ENCODE measurements at regions of chr16 and their contacts with region 1.

Region 1: GRCh38 chr16:1363501-1364041 is 11.8 kb downstream of the GNPTG start:
- DNase-seq: peak; percentile 79
- ATAC-seq: peak; percentile 94
- H3K4me3 Mint-ChIP-seq: no peak overlapping the region
- H3K27ac Mint-ChIP-seq: peak overlapping the region; percentile 92; the same call in 1 of the 2 replicates
- H3K4me1 Mint-ChIP-seq: no peaks in the 10 kb centered on the region
- H3K27me3 Mint-ChIP-seq: no peaks in the 10 kb centered on the region
- CTCF ChIP-seq: peak; percentile 77

Region 2: DNA sequence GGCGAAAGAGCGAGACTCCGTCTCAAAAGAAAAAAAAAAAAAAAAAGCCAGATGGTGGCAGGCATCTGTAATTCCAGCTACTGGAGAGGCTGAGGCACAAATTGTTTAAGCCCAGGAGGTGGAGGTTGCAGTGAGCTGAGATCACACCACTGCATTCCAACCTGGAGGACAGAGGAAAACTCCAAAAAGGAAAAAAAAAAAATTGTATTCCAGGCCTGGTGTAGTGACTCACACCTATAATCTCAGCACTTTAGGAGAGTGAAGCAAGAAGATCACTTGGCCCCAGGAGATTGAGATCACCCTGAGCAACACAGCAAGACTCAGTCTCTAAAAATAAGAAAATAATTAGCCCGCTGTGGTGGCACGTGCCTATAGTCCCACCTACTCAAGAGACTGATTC is 1163.2 kb before region 1 on chr16:
- CTCF ChIA-PET with region 1: no interaction called
- POLR2A ChIA-PET with region 1: no interaction called
- DNase-seq: no peak
- ATAC-seq: no peak
- H3K4me3 Mint-ChIP-seq: no peak overlapping the region
- H3K27ac Mint-ChIP-seq: no peak overlapping the region
- H3K4me1 Mint-ChIP-seq: no peaks in the 10 kb centered on the region
- H3K27me3 Mint-ChIP-seq: no peaks in the 10 kb centered on the region
- CTCF ChIP-seq: no peak

Region 3: DNA sequence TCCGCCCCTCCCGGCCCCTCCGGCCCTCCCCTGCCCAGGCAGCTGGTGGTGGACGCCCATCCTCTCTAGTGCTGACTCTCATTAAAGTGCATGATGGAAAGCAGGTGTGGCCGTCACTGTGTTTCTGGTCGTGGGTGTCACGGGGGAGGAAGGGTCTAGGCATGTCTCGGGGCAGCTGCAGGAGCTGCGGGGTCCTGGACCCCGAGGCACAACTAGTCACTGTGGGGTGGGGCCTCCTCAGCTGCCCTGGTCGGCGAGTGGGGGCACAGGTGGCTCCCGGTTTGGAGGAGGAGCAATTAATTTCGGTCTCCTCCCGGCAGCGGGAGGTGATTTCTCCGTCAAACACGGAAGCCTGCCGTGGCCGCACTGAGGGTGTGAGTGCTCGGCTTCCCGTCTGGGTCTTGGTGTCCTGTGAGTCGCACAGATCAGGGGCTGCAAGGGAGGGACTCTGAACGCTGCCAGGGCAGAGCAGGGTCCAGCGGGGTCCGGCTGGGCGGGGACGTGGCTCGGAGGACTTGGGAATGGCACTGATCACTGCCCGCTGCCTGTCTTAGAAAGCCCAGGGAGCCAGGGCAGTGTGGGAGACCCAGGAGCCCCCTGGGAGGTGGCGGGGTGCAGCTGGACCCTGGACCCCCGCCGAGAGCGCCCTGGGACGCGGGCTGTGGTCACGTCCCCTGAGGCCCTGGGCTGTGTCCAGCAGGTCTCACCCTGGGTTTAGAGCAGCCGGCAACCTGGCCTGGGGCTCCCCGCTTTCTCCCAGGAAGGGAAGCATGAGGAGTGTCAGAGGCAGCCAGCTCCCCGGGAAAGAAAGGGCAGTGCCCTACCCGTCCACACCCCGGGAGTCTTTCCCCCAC is 104.4 kb before region 1 on chr16:
- CTCF ChIA-PET with region 1: no interaction called
- POLR2A ChIA-PET with region 1: no interaction called
- DNase-seq: no peak
- ATAC-seq: no peak
- H3K4me3 Mint-ChIP-seq: peak overlapping the region; percentile 56
- H3K27ac Mint-ChIP-seq: no peak overlapping the region
- H3K4me1 Mint-ChIP-seq: peaks cover 5% of the 10 kb centered on the region
- H3K27me3 Mint-ChIP-seq: peaks cover 28% of the 10 kb centered on the region
- CTCF ChIP-seq: no peak

Region 4: DNA sequence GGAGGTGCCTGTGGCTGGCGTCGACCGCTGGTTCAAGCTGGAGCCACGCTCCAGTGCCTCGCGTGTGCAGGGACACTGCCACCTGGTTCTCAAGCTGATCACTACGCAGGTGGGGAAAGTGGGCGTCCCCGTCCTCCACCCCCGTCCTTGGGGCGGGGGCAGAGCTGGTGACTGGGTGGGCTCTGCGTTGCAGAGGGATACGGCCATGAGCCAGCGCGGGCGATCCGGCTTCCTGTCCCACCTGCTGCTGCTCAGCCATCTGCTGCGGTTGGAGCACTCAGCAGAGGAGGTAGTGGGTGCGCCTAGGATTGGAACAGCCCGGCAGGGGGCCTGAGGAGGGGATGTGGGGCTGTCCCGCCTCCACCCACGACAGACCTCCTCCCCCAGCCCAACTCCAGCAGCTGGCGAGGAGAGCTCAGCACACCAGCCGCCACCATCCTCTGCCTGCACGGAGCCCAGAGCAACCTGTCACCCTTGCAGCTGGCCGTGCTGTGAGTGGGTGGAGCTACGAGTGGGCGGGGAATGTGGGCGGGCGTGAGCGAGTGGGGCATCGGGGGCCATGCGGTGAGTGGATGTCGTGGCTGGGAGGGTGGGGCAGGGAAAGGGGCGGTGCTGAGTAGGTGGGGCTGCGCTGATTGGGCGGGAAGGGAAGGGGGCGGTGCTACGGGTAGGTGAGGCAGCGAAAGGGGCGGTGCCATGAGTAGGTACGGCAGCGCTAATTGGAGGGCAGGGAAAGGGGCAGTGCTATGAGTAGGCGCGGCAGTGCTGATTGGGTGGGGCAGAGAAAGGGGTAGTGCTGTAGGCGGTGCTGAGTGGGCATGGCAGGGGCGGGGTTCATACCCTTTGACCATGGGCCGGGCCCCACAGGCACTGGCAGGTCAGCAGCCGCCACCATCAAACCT is 20.8 kb before region 1 on chr16:
- CTCF ChIA-PET with region 1: interaction called, 19 read pairs
- POLR2A ChIA-PET with region 1: no interaction called
- DNase-seq: peak; percentile 98
- ATAC-seq: peak; percentile 98
- H3K4me3 Mint-ChIP-seq: peak overlapping the region; percentile 71
- H3K27ac Mint-ChIP-seq: peak overlapping the region; percentile 36; the same call in 1 of the 2 replicates
- H3K4me1 Mint-ChIP-seq: peaks cover 4% of the 10 kb centered on the region
- H3K27me3 Mint-ChIP-seq: no peaks in the 10 kb centered on the region; the same call in 1 of the 2 replicates
- CTCF ChIP-seq: no peak

Region 5: DNA sequence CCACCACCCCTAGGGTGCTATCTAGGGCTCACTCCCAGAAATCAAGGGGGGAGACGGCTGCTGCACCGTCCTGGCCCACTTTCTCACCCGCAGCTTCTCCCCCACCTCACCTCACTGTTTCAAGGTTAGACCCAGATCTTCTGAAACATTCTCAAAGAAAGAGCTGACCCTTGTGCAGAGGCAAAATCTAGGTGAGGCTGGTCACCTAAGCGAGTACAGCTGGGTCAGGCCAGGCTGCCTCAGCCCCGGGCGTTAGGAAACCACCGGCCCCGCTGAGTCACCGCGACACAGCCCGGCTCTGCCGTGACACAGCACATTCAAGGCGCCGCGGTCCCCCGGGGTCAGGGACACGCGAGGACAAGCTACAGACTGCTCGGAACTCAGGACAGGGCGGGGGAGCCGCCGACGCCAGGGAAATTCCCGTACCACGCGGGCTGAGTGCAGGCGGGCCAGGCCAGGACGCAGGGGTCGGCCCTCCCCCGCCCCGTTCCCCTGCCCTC is 15.3 kb after region 1 on chr16:
- CTCF ChIA-PET with region 1: interaction called, 31 read pairs
- POLR2A ChIA-PET with region 1: no interaction called
- DNase-seq: peak; percentile 41
- ATAC-seq: peak; percentile 14
- H3K4me3 Mint-ChIP-seq: peak overlapping the region; percentile 83
- H3K27ac Mint-ChIP-seq: peak overlapping the region; percentile 70
- H3K4me1 Mint-ChIP-seq: peaks cover 18% of the 10 kb centered on the region
- H3K27me3 Mint-ChIP-seq: no peaks in the 10 kb centered on the region
- CTCF ChIP-seq: no peak

Measured in WTC11 (cell line).